ENCODE measurements at regions of chr1 and their contacts with region 1.

Region 1: DNA sequence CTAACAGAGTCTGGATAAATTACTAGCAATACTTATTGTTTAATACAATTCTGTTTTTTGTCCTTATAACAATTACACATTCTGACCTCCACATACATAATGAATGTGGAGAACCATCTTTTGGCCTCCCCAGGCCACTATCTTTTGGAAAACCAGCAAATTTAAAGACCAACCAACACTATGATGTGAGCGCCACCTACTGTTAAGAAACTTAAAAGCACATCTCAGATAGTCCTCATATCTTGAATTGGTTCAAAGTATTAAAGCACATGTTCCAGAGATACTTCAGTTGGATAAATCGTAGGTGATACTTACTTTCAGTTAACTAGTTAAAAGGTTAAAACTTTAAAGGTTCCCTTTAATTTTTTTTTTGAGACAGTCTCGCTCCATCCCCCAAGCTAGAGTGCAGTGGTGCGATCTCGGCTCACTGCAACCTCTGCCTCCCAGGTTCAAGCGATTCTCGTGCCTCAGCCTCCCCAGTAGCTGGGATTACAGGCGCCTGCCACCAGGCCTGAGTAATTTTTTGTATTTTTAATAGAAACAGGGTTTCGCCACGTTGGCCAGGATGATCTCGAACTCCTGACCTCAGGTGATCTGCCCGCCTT is 29.3 kb upstream of the USP1 start:
- DNase-seq: peak; percentile 59
- CTCF ChIP-seq: peak; percentile 46

Region 2: DNA sequence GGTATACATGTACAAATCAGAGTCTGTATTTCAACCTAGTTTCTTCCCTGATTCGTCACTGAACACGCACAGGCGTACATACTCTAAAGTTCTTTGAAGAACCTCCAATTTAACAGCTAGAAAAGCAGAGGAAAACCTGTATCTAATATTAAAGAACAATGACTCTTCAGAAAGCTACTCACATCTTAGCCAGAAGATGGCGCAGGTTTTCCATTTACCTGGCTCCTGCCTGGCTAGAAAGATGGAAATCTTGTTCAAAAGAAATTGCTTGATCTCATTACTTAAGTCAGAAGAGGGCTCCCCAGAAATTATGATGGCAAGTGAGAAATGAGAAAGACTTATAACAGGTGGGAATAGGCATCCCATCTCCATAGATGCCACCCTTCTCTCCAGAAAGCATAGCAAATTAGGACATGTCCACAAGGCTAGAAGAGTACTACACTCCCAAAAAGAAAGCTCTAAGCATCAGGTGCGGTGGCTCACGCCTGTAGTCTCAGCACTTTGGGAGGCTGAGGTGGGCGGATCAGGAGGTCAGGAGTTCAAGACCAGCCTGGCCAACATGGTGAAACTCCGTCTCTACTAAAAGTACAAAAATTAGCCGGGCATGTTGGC is 231.8 kb before region 1 on chr1:
- in situ Hi-C with region 1: loop called (anchors 5 kb)
- DNase-seq: peak; percentile 51
- CTCF ChIP-seq: peak; percentile 51

Measured in GM13976 (cell line).